ENCODE measurements at regions of chr9 and their contacts with region 1.

Region 1: GRCh38 chr9:87334366-87334765 is 163.3 kb upstream of the DAPK1 start:
- DNase-seq: no peak
- ATAC-seq: no peak

Region 2: GRCh38 chr9:87662808-87663528 is 328.6 kb after region 1 on chr9:
- intact Hi-C with region 1: loop called (anchors 5 kb)
- DNase-seq: peak; percentile 92
- ATAC-seq: peak; percentile 86

Region 3: DNA sequence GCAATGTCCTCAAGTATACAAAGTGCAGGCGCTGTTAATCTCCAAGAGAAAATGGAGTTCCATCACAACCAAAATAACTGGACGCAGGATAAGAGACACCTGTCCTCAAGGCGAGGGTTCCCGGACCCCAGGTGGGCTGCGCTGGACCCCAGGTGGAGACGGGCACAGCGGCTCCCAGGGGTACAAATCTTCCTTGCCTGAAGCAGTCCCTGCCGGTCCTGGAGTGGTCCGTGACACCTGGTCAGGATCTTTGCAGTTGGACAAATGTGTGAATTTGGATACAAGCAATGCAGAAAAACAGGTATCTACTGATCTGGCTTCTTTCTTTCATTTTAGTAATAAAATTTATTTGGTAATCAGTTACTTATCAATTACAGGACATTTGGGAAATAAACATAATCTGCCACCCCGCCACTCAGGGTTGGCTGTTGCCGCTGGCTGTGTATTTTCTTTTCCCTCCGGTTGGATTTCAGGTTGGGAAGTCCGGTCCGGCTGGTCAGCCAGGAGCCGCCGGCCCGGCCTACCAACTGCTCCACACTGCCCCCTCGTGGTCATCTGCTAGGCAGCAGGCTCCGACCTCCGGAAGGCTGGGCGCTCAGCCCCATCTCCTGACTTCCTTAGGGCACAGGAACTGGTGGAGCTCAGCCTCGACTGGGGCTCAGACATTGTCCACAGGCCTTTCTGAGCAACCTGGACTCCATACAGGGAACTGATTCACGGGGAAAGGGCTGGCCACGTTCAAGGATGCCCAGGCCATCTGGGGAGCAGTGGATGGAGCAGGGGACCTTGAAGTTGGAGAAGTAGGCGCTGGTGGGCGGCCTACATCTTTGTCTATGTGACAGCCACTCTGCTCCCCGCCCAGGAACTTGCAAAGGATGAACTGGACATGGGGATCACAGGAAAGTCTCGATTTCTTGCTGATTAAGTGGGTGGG is 1244.0 kb after region 1 on chr9:
- intact Hi-C with region 1: no loop called
- DNase-seq: peak; percentile 94
- ATAC-seq: peak; percentile 93

Measured in sciatic nerve (tissue), 2 donors.